ENCODE measurements at regions of chr11 and their contacts with region 1.

Region 1: GRCh38 chr11:67317205-67317887 is 14.0 kb downstream of the SSH3 start:
- DNase-seq: peak; percentile 98 to 100
- H3K4me3 ChIP-seq: peak overlapping the region; percentile 88
- H3K4me3 Mint-ChIP-seq: peak overlapping the region; percentile 96
- H3K27ac Mint-ChIP-seq: peak overlapping the region; percentile 99
- H3K4me1 ChIP-seq: peaks cover 18% of the 10 kb centered on the region
- H3K4me1 Mint-ChIP-seq: peaks cover 7% of the 10 kb centered on the region
- H3K27me3 ChIP-seq: no peaks in the 10 kb centered on the region
- H3K27me3 Mint-ChIP-seq: no peaks in the 10 kb centered on the region
- CTCF ChIP-seq: peak; percentile 98 to 99

Region 2: GRCh38 chr11:67053896-67054842 is 263.2 kb before region 1 on chr11:
- CTCF ChIA-PET with region 1: interaction called, 8 read pairs
- POLR2A ChIA-PET with region 1: no interaction called
- intact Hi-C with region 1: loop called (anchors 5 kb)
- DNase-seq: peak; percentile 83 to 85
- H3K4me3 ChIP-seq: no peak overlapping the region
- H3K4me3 Mint-ChIP-seq: no peak overlapping the region
- H3K27ac Mint-ChIP-seq: peak overlapping the region; percentile 92
- H3K4me1 ChIP-seq: peaks cover 40% of the 10 kb centered on the region
- H3K4me1 Mint-ChIP-seq: peaks cover 26% of the 10 kb centered on the region
- H3K27me3 ChIP-seq: no peaks in the 10 kb centered on the region
- H3K27me3 Mint-ChIP-seq: no peaks in the 10 kb centered on the region
- CTCF ChIP-seq: peak; percentile 96 to 99

Region 3: DNA sequence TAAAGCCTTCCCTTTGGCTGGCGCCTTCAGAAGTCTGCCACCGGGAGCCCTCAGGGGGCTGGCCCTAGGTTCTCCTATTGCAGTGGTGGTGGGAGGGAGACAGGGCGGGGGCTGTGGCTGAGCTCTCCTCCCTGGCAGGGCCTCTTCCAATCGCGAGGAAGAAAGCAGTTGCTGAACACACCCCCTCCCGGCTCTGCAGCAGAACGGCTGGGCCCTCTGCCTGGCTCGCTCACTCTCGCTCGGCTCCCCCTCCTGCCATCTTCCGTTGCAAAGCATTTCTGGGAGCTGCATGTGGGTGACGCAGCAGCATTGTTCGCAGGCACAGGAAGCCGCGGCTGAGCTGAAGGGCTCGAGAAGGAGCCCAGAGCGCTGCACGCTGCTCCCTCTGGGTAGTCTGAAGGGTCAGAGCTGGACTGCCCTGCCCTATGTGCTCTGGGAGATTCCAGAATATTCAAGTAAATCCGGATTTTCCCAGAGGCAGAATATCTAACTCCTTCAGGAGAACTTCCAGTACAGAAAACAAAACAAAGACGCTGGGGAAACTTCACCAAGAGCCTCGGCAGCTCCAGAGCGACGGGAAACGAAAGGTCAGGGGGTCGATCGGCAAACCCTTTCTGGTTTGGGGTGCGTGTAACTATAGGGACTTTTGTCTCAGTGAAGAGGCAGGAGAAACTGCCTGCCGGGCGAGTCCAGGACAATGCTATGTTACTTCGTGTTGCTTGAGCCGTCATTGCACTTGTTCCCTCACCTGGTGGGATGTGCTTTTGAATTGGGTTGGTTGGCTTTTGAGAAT is 77.4 kb before region 1 on chr11:
- CTCF ChIA-PET with region 1: interaction called, 22 read pairs
- POLR2A ChIA-PET with region 1: interaction called, 18 read pairs
- intact Hi-C with region 1: no loop called
- DNase-seq: peak; percentile 100
- H3K4me3 ChIP-seq: peak overlapping the region; percentile 46
- H3K4me3 Mint-ChIP-seq: peak overlapping the region; percentile 96
- H3K27ac Mint-ChIP-seq: peak overlapping the region; percentile 98
- H3K4me1 ChIP-seq: peaks cover 30% of the 10 kb centered on the region
- H3K4me1 Mint-ChIP-seq: peaks cover 34% of the 10 kb centered on the region
- H3K27me3 ChIP-seq: no peaks in the 10 kb centered on the region
- H3K27me3 Mint-ChIP-seq: no peaks in the 10 kb centered on the region
- CTCF ChIP-seq: no peak

Region 4: GRCh38 chr11:67288452-67289225 is 28.7 kb before region 1 on chr11:
- CTCF ChIA-PET with region 1: interaction called, 27 read pairs
- POLR2A ChIA-PET with region 1: interaction called, 12 read pairs
- intact Hi-C with region 1: loop called (anchors 1 kb)
- DNase-seq: peak; percentile 94 to 95
- H3K4me3 ChIP-seq: peak overlapping the region; percentile 91
- H3K4me3 Mint-ChIP-seq: peak overlapping the region; percentile 99
- H3K27ac Mint-ChIP-seq: peak overlapping the region; percentile 90
- H3K4me1 ChIP-seq: peaks cover 20% of the 10 kb centered on the region
- H3K4me1 Mint-ChIP-seq: peaks cover 29% of the 10 kb centered on the region
- H3K27me3 ChIP-seq: no peaks in the 10 kb centered on the region
- H3K27me3 Mint-ChIP-seq: no peaks in the 10 kb centered on the region
- CTCF ChIP-seq: peak; percentile 51 to 56

Region 5: DNA sequence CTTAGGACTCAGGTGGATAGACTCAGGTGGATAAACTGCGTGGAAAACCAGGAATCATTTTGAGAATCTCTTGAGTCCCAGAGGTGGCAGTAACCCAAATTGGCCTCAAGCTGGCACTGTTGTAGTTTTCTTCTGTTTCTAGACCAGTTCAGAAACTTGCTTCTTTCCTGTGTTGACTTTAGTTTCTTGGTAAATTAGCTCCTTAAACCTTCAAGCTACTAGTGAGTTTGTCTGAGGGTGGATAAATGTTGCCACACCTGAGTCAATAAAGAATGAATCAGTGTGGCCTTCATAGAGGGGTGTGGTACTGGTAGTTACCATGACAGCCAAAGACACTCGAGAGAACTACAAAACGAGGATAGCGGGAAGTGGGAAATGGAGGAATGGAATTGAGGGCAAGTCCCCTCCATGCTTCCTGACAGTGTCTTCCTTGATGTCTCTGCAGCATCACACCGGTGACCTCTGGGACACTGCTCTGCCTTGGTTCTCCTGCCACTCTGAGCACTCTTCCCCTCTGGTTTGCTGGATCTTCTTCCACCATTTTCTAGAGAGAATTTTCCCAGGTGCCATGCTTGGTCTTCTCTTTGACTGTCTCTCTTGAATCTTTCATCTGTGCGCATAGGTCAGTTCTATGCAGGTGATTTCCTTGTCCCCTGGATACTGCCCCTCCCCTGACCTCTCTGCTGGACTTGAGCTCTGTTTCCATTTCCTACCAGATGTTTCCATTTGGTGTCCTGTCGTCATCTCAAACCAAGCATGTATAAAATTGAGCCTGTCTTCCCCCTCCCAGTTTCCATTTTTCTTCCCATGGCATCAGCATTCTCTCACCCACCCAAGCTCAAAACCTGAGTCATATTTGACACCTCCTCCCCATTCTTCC is 28.8 kb after region 1 on chr11:
- CTCF ChIA-PET with region 1: interaction called, 17 read pairs
- POLR2A ChIA-PET with region 1: no interaction called
- intact Hi-C with region 1: no loop called
- DNase-seq: peak; percentile 82 to 87
- H3K4me3 ChIP-seq: no peak overlapping the region
- H3K4me3 Mint-ChIP-seq: peak overlapping the region; percentile 4
- H3K27ac Mint-ChIP-seq: peak overlapping the region; percentile 41
- H3K4me1 ChIP-seq: peaks cover 32% of the 10 kb centered on the region
- H3K4me1 Mint-ChIP-seq: peaks cover 35% of the 10 kb centered on the region
- H3K27me3 ChIP-seq: no peaks in the 10 kb centered on the region
- H3K27me3 Mint-ChIP-seq: no peaks in the 10 kb centered on the region
- CTCF ChIP-seq: peak; percentile 89 to 99

Region 6: GRCh38 chr11:67373925-67374618 is 56.7 kb after region 1 on chr11:
- CTCF ChIA-PET with region 1: interaction called, 10 read pairs
- POLR2A ChIA-PET with region 1: interaction called, 3 read pairs
- intact Hi-C with region 1: no loop called
- DNase-seq: peak; percentile 95
- H3K4me3 ChIP-seq: peak overlapping the region; percentile 86
- H3K4me3 Mint-ChIP-seq: peak overlapping the region; percentile 95
- H3K27ac Mint-ChIP-seq: peak overlapping the region; percentile 83
- H3K4me1 ChIP-seq: peaks cover 31% of the 10 kb centered on the region
- H3K4me1 Mint-ChIP-seq: no peaks in the 10 kb centered on the region
- H3K27me3 ChIP-seq: no peaks in the 10 kb centered on the region
- H3K27me3 Mint-ChIP-seq: no peaks in the 10 kb centered on the region
- CTCF ChIP-seq: peak; percentile 89 to 97

Region 7: DNA sequence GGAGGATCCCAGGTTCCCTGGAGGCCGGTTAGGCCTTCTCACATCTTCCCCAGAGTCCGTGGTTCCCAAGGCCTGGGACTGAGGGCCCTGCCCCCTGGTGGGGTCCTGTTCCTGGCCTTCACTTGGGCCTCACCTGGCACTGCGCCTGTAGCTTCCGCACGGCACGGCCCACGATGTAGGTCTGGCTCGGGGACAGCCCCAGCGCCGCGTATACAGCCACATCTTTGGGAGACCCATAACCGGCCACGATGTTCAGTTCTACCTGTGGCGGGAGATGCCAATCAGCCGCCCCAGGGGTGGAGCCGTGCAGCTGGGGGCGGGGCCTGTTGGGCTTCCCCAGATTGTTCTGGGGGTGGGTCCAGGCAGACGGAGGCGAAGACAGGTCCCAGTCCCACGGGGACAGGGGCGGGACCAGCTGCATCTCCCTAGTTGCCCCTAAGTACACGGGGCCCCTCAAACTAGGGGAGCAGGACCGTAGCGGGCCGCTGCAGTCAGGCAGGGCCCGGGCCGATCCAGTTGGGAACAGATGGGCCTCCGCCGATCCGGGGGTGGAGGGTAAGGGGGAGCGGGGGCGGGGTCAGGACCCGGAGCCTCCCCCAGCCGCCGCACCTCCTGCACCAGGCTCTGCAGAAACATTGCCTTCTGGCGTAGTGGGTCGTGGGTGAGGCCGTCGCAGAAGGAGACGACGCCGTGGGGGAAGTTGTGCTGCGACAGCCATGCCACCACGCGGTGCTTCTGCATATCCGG is 175.6 kb after region 1 on chr11:
- CTCF ChIA-PET with region 1: no interaction called
- POLR2A ChIA-PET with region 1: no interaction called
- intact Hi-C with region 1: no loop called
- DNase-seq: peak in 1 of 2 experiments; percentile 54
- H3K4me3 ChIP-seq: no peak overlapping the region
- H3K4me3 Mint-ChIP-seq: no peak overlapping the region
- H3K27ac Mint-ChIP-seq: no peak overlapping the region
- H3K4me1 ChIP-seq: 0 out of 2 replicates have a peak, but pooled peaks cover 5% of the 10 kb centered on the region
- H3K4me1 Mint-ChIP-seq: peaks cover 6% of the 10 kb centered on the region
- H3K27me3 ChIP-seq: no peaks in the 10 kb centered on the region
- H3K27me3 Mint-ChIP-seq: no peaks in the 10 kb centered on the region
- CTCF ChIP-seq: no peak